PC-3 (cell line): ENCODE measurements at regions of chr2 and their contacts with region 1.

Region 1: GRCh38 chr2:52810460-52810859 is 957.1 kb upstream of the CHAC2 start:
- DNase-seq: peak; percentile 69
- ATAC-seq: peak; percentile 97
- H3K4me3 ChIP-seq: no peak overlapping the region
- H3K27ac ChIP-seq: no peak overlapping the region
- H3K4me1 ChIP-seq: no peaks in the 10 kb centered on the region
- H3K27me3 ChIP-seq: no peaks in the 10 kb centered on the region
- CTCF ChIP-seq: peak; percentile 82

Region 2: DNA sequence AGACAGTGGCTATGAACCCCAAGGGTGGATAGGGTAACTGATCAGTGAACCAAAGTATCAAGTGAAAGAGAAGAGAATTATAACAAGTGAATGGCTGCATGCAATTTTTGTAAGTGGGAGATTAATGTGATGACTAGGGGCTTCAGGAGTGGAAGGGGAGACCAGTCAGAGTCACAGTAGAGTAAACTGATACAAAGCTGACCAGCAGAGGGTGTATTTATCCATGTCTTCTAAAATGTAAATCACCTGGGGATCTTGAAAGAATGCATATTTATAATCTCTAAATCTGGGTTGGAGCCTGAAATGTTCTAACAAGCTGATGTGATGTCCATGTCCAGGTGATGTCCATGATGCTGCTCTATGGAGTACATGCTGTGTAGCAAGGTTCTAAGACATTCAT is 394.1 kb before region 1 on chr2:
- CTCF ChIA-PET with region 1: no interaction called
- POLR2A ChIA-PET with region 1: no interaction called
- intact Hi-C with region 1: loop called (anchors 10 kb)
- DNase-seq: peak; percentile 47
- ATAC-seq: peak; percentile 64
- H3K4me3 ChIP-seq: no peak overlapping the region
- H3K27ac ChIP-seq: no peak overlapping the region
- H3K4me1 ChIP-seq: 0 out of 2 replicates have a peak, but pooled peaks cover 3% of the 10 kb centered on the region
- H3K27me3 ChIP-seq: no peaks in the 10 kb centered on the region
- CTCF ChIP-seq: peak; percentile 60

Region 3: GRCh38 chr2:52532956-52533355 is 277.5 kb before region 1 on chr2:
- CTCF ChIA-PET with region 1: no interaction called
- POLR2A ChIA-PET with region 1: no interaction called
- intact Hi-C with region 1: no loop called
- DNase-seq: no peak
- ATAC-seq: no peak
- H3K4me3 ChIP-seq: no peak overlapping the region
- H3K27ac ChIP-seq: no peak overlapping the region
- H3K4me1 ChIP-seq: no peaks in the 10 kb centered on the region
- H3K27me3 ChIP-seq: no peaks in the 10 kb centered on the region
- CTCF ChIP-seq: no peak

Region 4: GRCh38 chr2:52881606-52882005 is 71.1 kb after region 1 on chr2:
- CTCF ChIA-PET with region 1: no interaction called
- POLR2A ChIA-PET with region 1: no interaction called
- intact Hi-C with region 1: loop called (anchors 2 kb)
- DNase-seq: peak; percentile 93
- ATAC-seq: peak; percentile 96
- H3K4me3 ChIP-seq: 0 out of 2 replicates have a peak overlapping the region, but pooled peaks have one; percentile 7
- H3K27ac ChIP-seq: peak overlapping the region; percentile 72
- H3K4me1 ChIP-seq: peaks cover 38% of the 10 kb centered on the region
- H3K27me3 ChIP-seq: no peaks in the 10 kb centered on the region
- CTCF ChIP-seq: no peak

Region 5: DNA sequence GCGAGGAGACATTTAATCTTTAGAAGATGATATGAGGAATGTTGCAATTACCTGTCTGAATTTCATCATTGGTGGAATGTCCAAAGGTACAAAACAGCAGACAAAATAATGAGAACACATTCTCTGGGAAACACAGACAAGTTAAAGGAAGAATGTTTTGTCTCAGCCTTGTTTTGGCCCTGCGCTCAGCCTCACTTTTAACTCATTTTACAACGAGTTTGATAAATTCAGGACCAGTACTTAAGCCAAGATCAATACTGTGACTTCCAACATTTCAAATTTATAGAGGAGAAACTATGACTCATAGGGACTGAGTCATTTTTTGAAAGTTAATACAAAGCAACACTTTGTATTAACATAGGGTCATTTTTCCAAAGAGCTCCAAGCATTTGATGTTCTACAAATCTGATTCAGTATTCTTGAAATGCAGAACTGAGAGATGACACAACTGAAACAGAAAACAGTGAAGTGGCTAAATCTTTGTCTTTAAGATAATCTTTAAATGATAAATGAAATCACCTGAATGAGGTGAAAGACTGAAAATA is 124.0 kb after region 1 on chr2:
- CTCF ChIA-PET with region 1: no interaction called
- POLR2A ChIA-PET with region 1: no interaction called
- intact Hi-C with region 1: loop called (anchors 1 kb)
- DNase-seq: peak; percentile 97
- ATAC-seq: peak; percentile 71
- H3K4me3 ChIP-seq: peak overlapping the region; percentile 46; the same call in 1 of the 2 replicates
- H3K27ac ChIP-seq: peak overlapping the region; percentile 98
- H3K4me1 ChIP-seq: peaks cover 43% of the 10 kb centered on the region
- H3K27me3 ChIP-seq: no peaks in the 10 kb centered on the region
- CTCF ChIP-seq: no peak

Region 6: GRCh38 chr2:52976253-52976949 is 165.9 kb after region 1 on chr2:
- CTCF ChIA-PET with region 1: interaction called, 6 read pairs
- POLR2A ChIA-PET with region 1: no interaction called
- intact Hi-C with region 1: loop called (anchors 1 kb)
- DNase-seq: peak; percentile 72
- ATAC-seq: peak; percentile 88
- H3K4me3 ChIP-seq: no peak overlapping the region
- H3K27ac ChIP-seq: no peak overlapping the region
- H3K4me1 ChIP-seq: no peaks in the 10 kb centered on the region
- H3K27me3 ChIP-seq: no peaks in the 10 kb centered on the region
- CTCF ChIP-seq: peak; percentile 93

Region 7: DNA sequence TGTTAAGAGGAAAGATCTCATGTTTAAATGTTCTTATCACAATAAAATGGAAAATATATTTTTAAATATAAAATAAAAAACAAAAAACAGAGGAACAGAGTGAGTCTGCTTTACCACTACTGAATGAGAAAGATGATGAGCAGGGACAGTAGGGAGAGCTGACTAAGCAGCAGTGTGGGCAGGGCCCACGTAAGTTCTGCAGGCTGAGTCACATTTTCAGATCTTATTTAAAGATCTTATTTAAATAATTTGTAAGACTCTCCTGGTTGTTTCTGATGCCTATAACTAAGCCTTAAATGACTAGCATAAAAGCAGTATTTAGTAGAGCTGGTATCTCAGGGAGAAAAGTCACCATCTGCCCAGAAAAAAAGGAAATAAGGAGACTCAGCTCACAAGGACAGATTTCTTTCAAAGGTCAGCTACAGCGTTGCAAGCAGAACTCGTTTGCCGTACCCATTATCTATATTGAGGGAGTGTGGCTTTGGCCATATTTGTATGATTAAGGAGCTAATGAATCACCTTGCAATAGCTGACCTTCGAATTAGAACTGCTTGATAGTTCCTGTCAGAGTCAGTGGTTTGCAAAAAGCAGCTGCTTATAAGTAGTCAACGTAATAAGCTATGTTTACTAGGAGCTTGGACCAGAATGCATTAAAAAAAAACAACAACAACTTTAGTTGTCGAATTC is 635.1 kb after region 1 on chr2:
- CTCF ChIA-PET with region 1: no interaction called
- POLR2A ChIA-PET with region 1: no interaction called
- intact Hi-C with region 1: loop called (anchors 1 kb)
- DNase-seq: peak; percentile 76
- ATAC-seq: peak; percentile 93
- H3K4me3 ChIP-seq: peak overlapping the region; percentile 54
- H3K27ac ChIP-seq: peak overlapping the region; percentile 81
- H3K4me1 ChIP-seq: peaks cover 18% of the 10 kb centered on the region
- H3K27me3 ChIP-seq: no peaks in the 10 kb centered on the region
- CTCF ChIP-seq: no peak